ENCODE measurements at regions of chr12 and their contacts with region 1.

Region 1: DNA sequence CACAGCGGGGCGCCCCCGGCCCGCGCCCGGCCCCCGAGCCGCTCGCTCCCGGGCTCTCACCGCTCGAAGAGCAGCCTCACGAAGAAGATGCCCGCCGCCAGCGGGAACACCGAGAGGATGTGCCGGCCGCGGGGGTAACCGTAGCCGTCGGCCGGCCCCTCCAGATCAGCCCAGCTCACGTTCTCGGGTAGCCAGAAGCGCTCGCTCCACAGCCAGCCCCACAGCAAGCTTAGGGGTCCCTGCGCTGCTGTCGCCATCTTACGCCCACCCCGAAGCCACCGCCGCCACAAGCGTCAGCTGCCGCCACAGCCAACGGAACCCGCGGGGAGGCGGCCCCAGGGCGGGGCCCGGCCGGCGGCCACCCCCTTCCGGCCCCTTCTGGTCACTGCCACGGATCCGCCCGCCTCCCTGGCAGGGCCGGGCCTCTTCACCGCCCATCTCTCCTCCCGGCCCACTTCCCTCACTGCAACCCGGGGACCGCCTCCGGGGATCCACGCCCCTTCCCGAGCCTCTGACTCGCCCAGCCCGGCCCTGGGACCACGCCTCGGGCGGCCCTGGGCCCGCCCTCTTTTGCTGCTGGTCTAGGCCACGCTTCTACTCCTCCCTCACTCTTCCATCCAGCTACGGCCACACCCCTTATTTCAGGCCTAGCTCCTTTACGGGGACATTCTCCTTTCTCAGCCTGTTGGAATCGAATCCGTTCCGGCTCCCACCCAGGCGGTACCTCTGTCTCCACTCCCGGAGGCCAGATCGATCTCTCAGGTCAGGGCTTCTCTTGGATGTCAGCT is at the start of gene CERS5:
- DNase-seq: peak; percentile 99
- ATAC-seq: peak; percentile 99 to 100 (median 100)
- H3K4me3 ChIP-seq: peak within 1 kb of the TSS; percentile 61 to 100 (median 92)
- H3K27ac ChIP-seq: peak within 1 kb of the TSS; percentile 55 to 97 (median 92)
- H3K4me1 ChIP-seq: peaks cover 0 to 18% (median 10%) of the 10 kb centered on the region in 12 donors
- H3K27me3 ChIP-seq: no peaks in the 10 kb centered on the region
- CTCF ChIP-seq: peak in 9 of 12 donors; percentile 17 to 55 (median 35)
- POLR2A ChIP-seq: peak in 1 of 2 donors; percentile 62
- total RNA-seq, gene CERS5: 6.8 to 28.4 (median 9.3) TPM

Region 2: GRCh38 chr12:50084775-50085614 is 82.2 kb before region 1 on chr12 and contains the start of gene SMARCD1:
- intact Hi-C with region 1: loop called in 1 of 10 experiments (anchors 2 kb)
- DNase-seq: peak; percentile 92 to 97 (median 95)
- ATAC-seq: peak; percentile 95 to 97 (median 96)
- H3K4me3 ChIP-seq: peak within 1 kb of the TSS; percentile 80 to 99 (median 94)
- H3K27ac ChIP-seq: peak within 1 kb of the TSS; percentile 90 to 100 (median 98)
- H3K4me1 ChIP-seq: peaks cover 0 to 29% (median 14%) of the 10 kb centered on the region in 12 donors
- H3K27me3 ChIP-seq: no peaks in the 10 kb centered on the region
- CTCF ChIP-seq: peak in 10 of 12 donors; percentile 19 to 83 (median 66)
- POLR2A ChIP-seq: no peak
- total RNA-seq, gene SMARCD1: 13.6 to 35.7 (median 22.0) TPM

Region 3: GRCh38 chr12:50111693-50112455 is 55.4 kb before region 1 on chr12 and contains the start of gene COX14:
- intact Hi-C with region 1: loop called in 8 of 10 experiments (anchors 1 to 10 kb)
- DNase-seq: peak; percentile 99
- ATAC-seq: peak; percentile 89 to 94 (median 92)
- H3K4me3 ChIP-seq: peak within 1 kb of the TSS; percentile 66 to 99 (median 89)
- H3K27ac ChIP-seq: peak within 1 kb of the TSS; percentile 90 to 100 (median 96)
- H3K4me1 ChIP-seq: peaks cover 0 to 62% (median 48%) of the 10 kb centered on the region in 12 donors
- H3K27me3 ChIP-seq: no peaks in the 10 kb centered on the region
- CTCF ChIP-seq: peak; percentile 87 to 99 (median 94)
- POLR2A ChIP-seq: peak in 1 of 2 donors; percentile 97
- total RNA-seq, gene COX14: 134 to 217 (median 154) TPM

Measured in heart left ventricle (tissue), 16 donors.